ENCODE measurements at regions of chr9 and their contacts with region 1.

Region 1: GRCh38 chr9:136170006-136170901 is 34.7 kb downstream of the LHX3 start:
- DNase-seq: peak; percentile 61 to 81 (median 80)
- ATAC-seq: peak; percentile 97
- H3K4me3 ChIP-seq: no peak overlapping the region
- H3K27ac ChIP-seq: no peak overlapping the region
- H3K4me1 ChIP-seq: peaks cover 0 to 22% of the 10 kb centered on the region in 2 experiments; a peak in 2 of 5 replicates
- H3K27me3 ChIP-seq: peaks cover 22 to 63% of the 10 kb centered on the region in 2 experiments; a peak in 4 of 5 replicates
- CTCF ChIP-seq: peak; percentile 88 to 90 (median 89)
- EP300 ChIP-seq: no peak
- POLR2A ChIP-seq: no peak
- RAD21 ChIP-seq: peak; percentile 87 to 98

Region 2: DNA sequence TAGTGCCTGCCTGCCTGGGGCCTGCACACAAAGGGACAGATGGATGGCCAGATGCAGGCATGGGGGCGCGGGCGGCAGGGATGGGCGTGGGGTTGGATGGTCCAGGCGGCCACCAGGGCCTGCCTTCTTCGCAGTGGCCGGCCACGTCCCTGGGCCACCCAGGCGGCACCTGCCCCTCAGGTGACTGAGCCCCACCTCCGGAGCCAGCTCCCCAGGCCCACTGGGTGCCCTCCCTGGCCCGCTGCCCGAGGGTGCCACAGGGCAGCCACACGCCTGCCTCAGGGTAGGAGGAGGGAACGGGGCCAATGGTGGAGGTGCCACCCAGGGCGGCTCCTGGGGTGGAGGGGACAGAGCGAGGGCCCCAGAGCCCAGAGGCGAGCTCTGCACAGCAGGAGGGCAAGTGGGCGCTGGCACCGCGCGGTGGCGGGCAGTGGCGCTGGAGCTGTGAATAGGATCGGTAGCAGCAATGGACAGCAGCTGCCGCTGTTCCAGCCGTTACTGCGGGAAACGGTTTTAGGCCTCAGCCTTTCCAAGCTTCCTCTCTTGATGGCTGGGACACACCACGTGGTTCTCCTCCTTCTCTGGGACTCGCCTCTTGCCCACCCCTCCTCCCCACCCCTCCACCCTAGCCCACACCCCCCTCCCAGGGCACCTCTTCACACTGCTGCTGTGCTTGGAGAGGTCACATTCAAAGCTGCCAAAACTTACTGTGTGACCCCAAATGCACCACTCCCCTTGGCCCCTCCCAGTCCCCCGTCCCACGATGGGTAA is 15.5 kb after region 1 on chr9:
- CTCF ChIA-PET with region 1: no interaction called
- POLR2A ChIA-PET with region 1: interaction called, 10 read pairs
- in situ Hi-C with region 1: no loop called
- intact Hi-C with region 1: no loop called
- DNase-seq: no peak
- ATAC-seq: no peak
- H3K4me3 ChIP-seq: no peak overlapping the region
- H3K27ac ChIP-seq: no peak overlapping the region
- H3K4me1 ChIP-seq: peaks cover 10 to 45% of the 10 kb centered on the region in 2 experiments; a peak in 4 of 5 replicates
- H3K27me3 ChIP-seq: peaks cover 20 to 59% of the 10 kb centered on the region in 2 experiments; a peak in 4 of 5 replicates
- CTCF ChIP-seq: no peak
- EP300 ChIP-seq: no peak
- POLR2A ChIP-seq: no peak
- RAD21 ChIP-seq: no peak

Region 3: DNA sequence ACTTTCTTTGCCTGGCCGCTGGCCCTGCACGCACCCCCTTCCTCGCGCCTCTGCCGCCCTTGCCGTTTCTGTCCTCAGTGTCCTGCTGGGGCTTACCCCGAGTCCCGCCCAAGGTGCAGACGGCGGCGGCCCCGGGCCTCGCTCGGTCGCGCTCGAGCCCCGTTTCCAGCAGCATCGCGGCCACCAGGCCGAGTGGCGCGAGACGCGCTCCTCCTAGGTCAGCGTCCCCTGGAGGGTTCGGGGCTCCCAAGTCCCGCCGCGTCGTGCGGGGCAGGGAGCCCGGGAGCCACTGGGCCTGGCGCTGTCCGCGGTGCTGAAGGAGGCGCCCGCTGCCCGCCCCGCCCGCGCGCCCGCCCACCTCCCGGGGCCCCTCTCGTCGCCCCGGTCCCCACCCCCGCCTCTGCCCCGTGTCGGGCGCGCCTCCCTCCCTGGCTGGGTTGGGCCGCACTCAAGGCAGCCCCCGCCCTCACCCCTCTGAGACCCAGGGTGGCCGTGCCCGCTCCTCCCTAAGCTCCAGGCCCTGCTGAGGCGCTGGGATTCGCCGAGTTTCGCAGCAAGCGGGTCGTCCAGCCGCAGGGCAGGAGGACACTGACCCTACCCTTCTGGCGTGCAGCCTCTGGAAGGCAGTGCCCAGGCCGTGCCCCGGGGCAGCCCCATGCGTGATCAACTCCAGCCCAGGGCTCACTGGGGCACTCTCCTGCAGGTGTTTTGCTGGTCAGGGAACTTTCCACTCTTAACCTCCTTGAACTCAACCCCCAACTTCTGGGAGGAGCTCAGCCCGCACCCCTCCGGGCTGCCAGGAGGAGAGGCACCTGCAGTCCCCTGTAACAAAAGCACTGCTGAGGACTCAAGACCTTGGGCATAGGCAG is 34.8 kb after region 1 on chr9 and contains the start of gene LHX3:
- CTCF ChIA-PET with region 1: no interaction called
- POLR2A ChIA-PET with region 1: no interaction called
- in situ Hi-C with region 1: no loop called
- intact Hi-C with region 1: no loop called
- DNase-seq: peak in 2 of 4 experiments; percentile 66 to 68
- ATAC-seq: no peak
- H3K4me3 ChIP-seq: no peak within 1 kb of the TSS
- H3K27ac ChIP-seq: no peak within 1 kb of the TSS; the same call in 2 of the 3 replicates
- H3K4me1 ChIP-seq: peaks cover 21 to 77% of the 10 kb centered on the region in 2 experiments
- H3K27me3 ChIP-seq: peaks cover 17 to 25% of the 10 kb centered on the region in 2 experiments; a peak in 4 of 5 replicates
- CTCF ChIP-seq: no peak
- EP300 ChIP-seq: no peak
- POLR2A ChIP-seq: no peak
- RAD21 ChIP-seq: no peak
- polyA plus RNA-seq, gene LHX3: not detected

Region 4: GRCh38 chr9:136225748-136226679 is 55.8 kb after region 1 on chr9:
- CTCF ChIA-PET with region 1: interaction called, 9 read pairs
- POLR2A ChIA-PET with region 1: no interaction called
- in situ Hi-C with region 1: no loop called
- intact Hi-C with region 1: loop called (anchors 2 kb)
- DNase-seq: peak; percentile 71 to 77 (median 72)
- ATAC-seq: peak; percentile 98
- H3K4me3 ChIP-seq: no peak overlapping the region
- H3K27ac ChIP-seq: no peak overlapping the region
- H3K4me1 ChIP-seq: peaks cover 8 to 54% of the 10 kb centered on the region in 2 experiments
- H3K27me3 ChIP-seq: no peaks in the 10 kb centered on the region
- CTCF ChIP-seq: peak; percentile 89 to 95 (median 94)
- EP300 ChIP-seq: no peak
- POLR2A ChIP-seq: no peak
- RAD21 ChIP-seq: peak; percentile 50 to 88

Region 5: GRCh38 chr9:136245219-136246150 is 75.2 kb after region 1 on chr9 and contains the start of gene QSOX2:
- CTCF ChIA-PET with region 1: no interaction called
- POLR2A ChIA-PET with region 1: no interaction called
- in situ Hi-C with region 1: no loop called
- intact Hi-C with region 1: no loop called
- DNase-seq: peak; percentile 89 to 93 (median 92)
- ATAC-seq: peak; percentile 82
- H3K4me3 ChIP-seq: peak within 1 kb of the TSS; percentile 75
- H3K27ac ChIP-seq: peak within 1 kb of the TSS; percentile 77
- H3K4me1 ChIP-seq: peaks cover 37 to 61% of the 10 kb centered on the region in 2 experiments
- H3K27me3 ChIP-seq: peaks cover 10 to 38% of the 10 kb centered on the region in 2 experiments; a peak in 4 of 5 replicates
- CTCF ChIP-seq: no peak
- EP300 ChIP-seq: no peak
- POLR2A ChIP-seq: no peak; the same call in 1 of the 2 replicates
- RAD21 ChIP-seq: no peak
- polyA plus RNA-seq, gene QSOX2: 0.51 to 0.91 TPM

Region 6: DNA sequence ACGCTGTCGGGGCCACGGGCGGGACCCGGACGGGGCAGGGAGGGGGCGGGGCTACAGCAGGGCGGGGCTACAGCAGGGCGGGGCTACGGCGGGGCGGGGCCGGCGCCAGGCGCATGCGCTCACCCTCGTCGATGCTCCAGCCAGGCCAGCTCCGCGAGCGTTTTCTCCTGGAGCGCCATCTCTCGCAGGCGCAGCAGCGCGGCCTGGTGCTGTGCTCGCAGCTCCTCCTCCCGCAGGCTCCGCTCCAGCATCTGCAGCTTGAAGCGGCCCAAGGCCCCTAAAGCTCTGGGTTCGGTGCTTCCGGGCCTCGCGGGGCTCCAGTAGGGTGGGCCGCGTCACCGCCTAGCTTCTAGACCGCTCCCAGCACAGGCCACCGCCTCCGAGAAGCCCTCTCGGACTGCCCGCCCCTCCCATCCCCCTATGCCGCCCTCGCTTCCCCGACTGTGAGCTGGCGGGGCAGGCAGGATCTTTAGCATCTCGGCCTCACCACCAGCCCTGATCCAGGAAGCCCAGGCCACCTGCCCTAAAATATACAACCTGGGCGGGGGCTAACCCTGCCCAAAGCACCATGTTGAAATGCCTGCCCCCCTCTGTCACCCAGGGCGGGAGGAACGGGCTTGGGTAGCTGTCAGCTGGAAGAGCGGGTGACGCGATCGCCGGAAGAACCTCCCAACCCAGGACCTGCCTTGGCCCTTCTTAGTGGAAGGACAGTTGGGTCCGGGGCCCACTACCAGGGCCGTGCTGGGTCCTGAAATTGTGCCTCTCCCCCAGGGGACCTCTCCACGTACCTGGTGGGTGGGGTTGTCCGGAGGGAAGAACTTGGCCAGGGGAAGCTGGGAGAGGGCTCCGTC is 97.2 kb after region 1 on chr9:
- CTCF ChIA-PET with region 1: interaction called, 3 read pairs
- POLR2A ChIA-PET with region 1: no interaction called
- in situ Hi-C with region 1: loop called (anchors 5 kb)
- intact Hi-C with region 1: loop called (anchors 1 kb)
- DNase-seq: peak; percentile 88 to 100 (median 99)
- ATAC-seq: peak; percentile 97
- H3K4me3 ChIP-seq: peak overlapping the region; percentile 37
- H3K27ac ChIP-seq: no peak overlapping the region
- H3K4me1 ChIP-seq: peaks cover 0 to 29% of the 10 kb centered on the region in 2 experiments; a peak in 3 of 5 replicates
- H3K27me3 ChIP-seq: peaks cover 16 to 35% of the 10 kb centered on the region in 2 experiments
- CTCF ChIP-seq: peak; percentile 44 to 76 (median 66)
- EP300 ChIP-seq: no peak
- POLR2A ChIP-seq: no peak
- RAD21 ChIP-seq: peak; percentile 40 to 72

Region 7: GRCh38 chr9:136283291-136284235 is 113.3 kb after region 1 on chr9:
- CTCF ChIA-PET with region 1: interaction called, 25 read pairs
- POLR2A ChIA-PET with region 1: no interaction called
- in situ Hi-C with region 1: no loop called
- intact Hi-C with region 1: loop called (anchors 1 kb)
- DNase-seq: peak; percentile 80 to 84 (median 82)
- ATAC-seq: peak; percentile 98
- H3K4me3 ChIP-seq: no peak overlapping the region
- H3K27ac ChIP-seq: no peak overlapping the region
- H3K4me1 ChIP-seq: peaks cover 0 to 51% of the 10 kb centered on the region in 2 experiments; a peak in 2 of 5 replicates
- H3K27me3 ChIP-seq: peaks cover 30 to 70% of the 10 kb centered on the region in 2 experiments; a peak in 4 of 5 replicates
- CTCF ChIP-seq: peak; percentile 86 to 94 (median 93)
- EP300 ChIP-seq: no peak
- POLR2A ChIP-seq: no peak
- RAD21 ChIP-seq: peak; percentile 89 to 95

Measured in K562 (cell line).